ENCODE measurements at regions of chr16 and their contacts with region 1.

Region 1: DNA sequence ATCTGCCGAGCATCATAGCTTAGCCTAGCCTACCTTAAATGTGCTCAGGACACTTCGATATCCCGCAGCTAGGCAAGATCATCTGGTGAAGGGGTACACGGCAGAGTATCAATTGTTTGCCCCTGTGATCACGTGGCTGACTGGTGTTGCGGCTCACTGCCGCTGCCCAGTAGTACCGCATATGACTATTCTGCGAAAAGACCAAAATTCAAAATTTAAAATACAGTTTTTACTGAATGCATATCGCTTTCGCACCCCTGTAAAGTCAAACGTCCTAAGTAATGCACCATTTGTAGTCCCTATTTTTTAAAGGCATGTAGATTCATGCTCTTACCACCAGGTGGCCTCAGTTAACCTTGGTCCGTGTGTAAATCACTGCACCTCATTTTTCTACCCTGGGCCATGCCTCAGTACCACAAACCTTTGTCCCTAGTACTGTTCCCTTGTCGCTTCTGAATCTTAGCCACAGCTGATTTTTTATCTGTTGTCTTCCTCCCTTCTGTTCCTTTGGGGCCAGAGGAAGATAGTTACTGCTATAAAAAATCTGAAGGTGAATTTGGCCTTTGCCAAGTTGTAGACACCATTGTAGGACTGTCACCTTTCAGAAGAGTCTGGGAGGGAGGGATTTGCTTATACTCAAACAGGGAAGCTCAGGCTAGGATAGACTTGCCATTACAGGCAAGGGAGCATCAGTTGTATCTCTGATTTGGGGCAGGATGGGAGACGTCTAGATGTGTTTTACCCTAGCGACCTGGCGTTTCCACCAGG is 34.4 kb downstream of the WWP2 start:
- DNase-seq: peak in 3 of 5 donors; percentile 29 to 36 (median 32)
- ATAC-seq: peak; percentile 65 to 88 (median 78)
- H3K4me3 ChIP-seq: peak overlapping the region in 6 of 12 donors; percentile 20 to 35 (median 30)
- H3K27ac ChIP-seq: peak overlapping the region in 1 of 12 donors; percentile 15
- H3K4me1 ChIP-seq: peaks cover 0 to 10% (median 0%) of the 10 kb centered on the region in 12 donors
- H3K27me3 ChIP-seq: no peaks in the 10 kb centered on the region
- CTCF ChIP-seq: peak; percentile 81 to 95 (median 92)
- POLR2A ChIP-seq: no peak

Region 2: DNA sequence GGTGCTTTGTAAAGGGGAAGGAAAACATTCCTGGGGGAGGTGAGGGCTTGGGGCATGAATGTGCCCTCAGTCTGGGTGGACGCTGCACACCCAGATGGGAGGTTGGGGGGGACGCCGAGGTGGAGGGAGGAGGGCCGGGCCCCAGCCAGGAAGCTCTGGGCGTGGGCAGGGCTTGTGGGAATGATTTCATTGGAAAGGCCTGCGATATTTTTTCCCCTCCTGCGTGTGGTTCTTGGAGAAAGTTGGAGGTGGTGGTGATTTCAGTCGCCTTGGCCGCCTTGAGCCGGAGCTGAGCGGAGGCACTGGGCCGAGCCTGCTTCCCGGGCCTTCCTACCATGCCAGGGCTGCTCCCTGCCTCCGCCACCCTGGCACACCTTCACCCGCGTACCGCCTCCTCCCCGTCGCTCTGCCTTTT is 128.2 kb after region 1 on chr16:
- intact Hi-C with region 1: loop called in 2 of 10 experiments (anchors 1 to 5 kb)
- DNase-seq: peak; percentile 74 to 83 (median 81)
- ATAC-seq: peak; percentile 56 to 85 (median 82)
- H3K4me3 ChIP-seq: peak overlapping the region in 10 of 12 donors; percentile 36 to 61 (median 47)
- H3K27ac ChIP-seq: peak overlapping the region; percentile 76 to 92 (median 82)
- H3K4me1 ChIP-seq: peaks cover 5 to 71% (median 37%) of the 10 kb centered on the region in 12 donors
- H3K27me3 ChIP-seq: no peaks in the 10 kb centered on the region
- CTCF ChIP-seq: no peak
- POLR2A ChIP-seq: peak in 1 of 2 donors; percentile 69

Region 3: DNA sequence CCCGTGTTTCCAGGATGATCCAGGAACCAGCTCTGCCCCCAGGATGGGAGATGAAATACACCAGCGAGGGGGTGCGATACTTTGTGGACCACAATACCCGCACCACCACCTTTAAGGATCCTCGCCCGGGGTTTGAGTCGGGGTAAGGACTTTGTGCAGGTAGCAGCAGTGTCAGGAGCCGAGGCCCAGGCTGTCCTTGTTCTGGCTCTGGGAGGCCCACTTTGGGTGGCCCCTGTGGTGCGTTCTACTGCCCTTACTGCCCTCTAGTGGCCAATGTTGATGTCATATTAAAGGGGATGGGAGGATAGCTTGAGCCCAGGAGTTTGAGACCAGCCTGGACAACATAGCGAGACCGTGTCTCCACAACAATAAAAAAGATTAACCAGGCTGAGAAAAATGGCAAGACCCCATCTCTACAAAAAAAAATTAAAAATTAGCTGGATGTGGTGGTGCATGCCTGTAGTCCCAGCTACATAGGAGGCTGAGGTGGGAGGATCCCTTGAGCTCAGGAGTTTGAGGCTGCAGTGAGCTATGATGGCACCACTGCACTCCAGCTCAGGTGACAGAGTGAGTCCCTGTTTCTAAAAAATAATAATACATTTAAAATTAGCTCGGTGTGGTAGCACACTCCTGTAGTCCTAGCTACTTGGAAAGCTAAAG is 133.7 kb after region 1 on chr16:
- intact Hi-C with region 1: loop called (anchors 1 to 5 kb)
- DNase-seq: peak in 4 of 5 donors; percentile 50 to 72 (median 58)
- ATAC-seq: peak; percentile 64 to 80 (median 77)
- H3K4me3 ChIP-seq: no peak overlapping the region
- H3K27ac ChIP-seq: peak overlapping the region in 1 of 12 donors; percentile 6
- H3K4me1 ChIP-seq: peaks cover 3 to 51% (median 28%) of the 10 kb centered on the region in 12 donors
- H3K27me3 ChIP-seq: no peaks in the 10 kb centered on the region
- CTCF ChIP-seq: peak; percentile 69 to 87 (median 78)
- POLR2A ChIP-seq: no peak

Measured in heart left ventricle (tissue), 16 donors.